H1 (cell line): ENCODE measurements at regions of chr11 and their contacts with region 1.

Region 1: GRCh38 chr11:44893846-44894617 is 56.7 kb downstream of the TP53I11 start:
- DNase-seq: peak; percentile 79 to 92
- H3K4me3 ChIP-seq: no peak overlapping the region
- H3K27ac ChIP-seq: no peak overlapping the region
- H3K4me1 ChIP-seq: peaks cover 2 to 28% (median 9%) of the 10 kb centered on the region in 4 experiments
- H3K27me3 ChIP-seq: peaks cover 0 to 13% (median 3%) of the 10 kb centered on the region in 4 experiments; a peak in 3 of 7 replicates
- CTCF ChIP-seq: peak; percentile 96 to 99 (median 98)
- EP300 ChIP-seq: no peak
- POLR2A ChIP-seq: no peak
- RAD21 ChIP-seq: peak; percentile 98 to 100

Region 2: DNA sequence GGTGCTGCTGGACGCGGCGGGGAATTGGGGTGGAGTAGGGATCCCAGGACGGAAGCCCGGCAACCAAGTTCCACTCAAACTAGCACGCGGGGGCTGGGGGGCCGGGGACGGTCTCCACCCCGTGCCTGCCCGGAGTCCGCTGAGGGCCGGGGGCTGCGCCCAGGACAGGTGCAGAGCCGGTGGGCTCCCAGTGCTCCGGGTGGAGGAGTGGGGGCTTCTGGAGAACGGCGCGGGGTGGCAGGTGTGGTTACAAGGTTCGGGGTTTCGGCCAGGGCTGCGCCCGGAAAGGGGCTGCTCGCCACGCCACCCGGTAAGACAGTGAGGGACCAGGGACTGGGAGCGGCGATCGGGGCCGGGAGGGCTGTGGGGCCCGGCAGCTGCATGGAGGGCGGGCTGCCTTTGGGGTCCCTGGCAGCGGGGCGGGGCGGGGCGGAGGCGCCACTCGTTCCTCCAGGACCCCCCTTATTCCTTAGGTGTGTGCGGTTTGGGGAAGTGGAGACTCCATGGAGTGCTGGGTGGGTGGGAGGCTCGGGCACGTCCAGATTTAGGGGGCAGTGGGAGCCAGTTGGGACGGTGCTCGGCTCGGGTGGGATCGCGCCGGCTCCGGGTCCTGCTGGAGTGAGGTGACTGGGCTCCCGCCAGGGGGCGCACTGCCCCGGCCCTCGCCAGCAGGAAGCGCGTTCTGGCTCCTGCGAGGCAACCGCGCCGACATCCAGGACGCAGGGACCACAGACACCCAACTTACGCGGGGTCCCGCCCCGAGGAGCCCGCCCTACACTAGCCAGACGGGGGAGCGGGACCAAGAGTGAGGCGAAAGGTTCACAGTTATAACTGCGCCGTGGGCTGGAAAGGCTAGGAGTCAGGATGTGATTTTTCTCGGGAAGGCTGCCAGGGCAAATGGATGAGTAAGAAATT is 166.4 kb before region 1 on chr11:
- CTCF ChIA-PET with region 1: interaction called, 25 read pairs
- POLR2A ChIA-PET with region 1: no interaction called
- DNase-seq: peak in 1 of 2 experiments; percentile 93
- H3K4me3 ChIP-seq: peak overlapping the region; percentile 14 to 73 (median 50)
- H3K27ac ChIP-seq: no peak overlapping the region
- H3K4me1 ChIP-seq: peaks cover 24 to 41% (median 26%) of the 10 kb centered on the region in 4 experiments
- H3K27me3 ChIP-seq: peaks cover 26 to 66% (median 57%) of the 10 kb centered on the region in 4 experiments
- CTCF ChIP-seq: peak; percentile 81 to 94 (median 89)
- EP300 ChIP-seq: no peak
- POLR2A ChIP-seq: no peak
- RAD21 ChIP-seq: peak; percentile 80 to 85

Region 3: DNA sequence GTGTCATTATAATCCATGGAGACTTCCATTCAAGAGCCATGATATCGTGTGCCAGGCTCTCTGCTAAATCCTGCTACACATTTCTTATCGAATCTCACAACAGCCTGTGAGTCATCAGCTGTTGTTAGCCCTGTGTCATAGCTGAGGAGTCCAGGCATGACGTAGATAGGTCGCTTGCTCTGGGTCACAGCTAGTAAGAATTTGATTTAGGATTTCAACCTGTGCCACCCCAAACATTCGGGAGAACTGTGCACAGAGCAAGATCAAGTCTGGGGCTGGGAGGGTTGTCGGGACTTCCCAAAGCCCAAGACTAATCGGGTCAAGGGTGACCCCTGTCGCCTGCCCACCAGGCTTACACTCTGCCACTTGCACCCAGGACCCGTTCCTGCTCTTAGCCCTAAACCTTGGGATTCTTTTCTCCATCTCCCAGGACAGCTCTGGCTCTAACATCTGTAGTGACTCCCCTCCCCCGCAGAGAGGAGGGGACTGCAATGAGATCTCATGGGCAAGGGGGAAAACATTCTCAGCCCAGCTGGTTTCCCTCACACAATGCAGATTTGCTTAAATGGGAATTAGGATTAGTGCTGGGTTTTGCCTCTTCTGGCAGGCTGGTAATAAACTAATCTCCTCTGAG is 133.0 kb before region 1 on chr11:
- CTCF ChIA-PET with region 1: interaction called, 13 read pairs
- POLR2A ChIA-PET with region 1: no interaction called
- DNase-seq: peak; percentile 61 to 68
- H3K4me3 ChIP-seq: no peak overlapping the region
- H3K27ac ChIP-seq: no peak overlapping the region
- H3K4me1 ChIP-seq: peaks cover 9 to 22% (median 14%) of the 10 kb centered on the region in 4 experiments
- H3K27me3 ChIP-seq: peaks cover 0 to 9% (median 6%) of the 10 kb centered on the region in 4 experiments; a peak in 5 of 7 replicates
- CTCF ChIP-seq: peak; percentile 75 to 86 (median 85)
- EP300 ChIP-seq: no peak
- POLR2A ChIP-seq: no peak
- RAD21 ChIP-seq: peak; percentile 88 to 90

Region 4: DNA sequence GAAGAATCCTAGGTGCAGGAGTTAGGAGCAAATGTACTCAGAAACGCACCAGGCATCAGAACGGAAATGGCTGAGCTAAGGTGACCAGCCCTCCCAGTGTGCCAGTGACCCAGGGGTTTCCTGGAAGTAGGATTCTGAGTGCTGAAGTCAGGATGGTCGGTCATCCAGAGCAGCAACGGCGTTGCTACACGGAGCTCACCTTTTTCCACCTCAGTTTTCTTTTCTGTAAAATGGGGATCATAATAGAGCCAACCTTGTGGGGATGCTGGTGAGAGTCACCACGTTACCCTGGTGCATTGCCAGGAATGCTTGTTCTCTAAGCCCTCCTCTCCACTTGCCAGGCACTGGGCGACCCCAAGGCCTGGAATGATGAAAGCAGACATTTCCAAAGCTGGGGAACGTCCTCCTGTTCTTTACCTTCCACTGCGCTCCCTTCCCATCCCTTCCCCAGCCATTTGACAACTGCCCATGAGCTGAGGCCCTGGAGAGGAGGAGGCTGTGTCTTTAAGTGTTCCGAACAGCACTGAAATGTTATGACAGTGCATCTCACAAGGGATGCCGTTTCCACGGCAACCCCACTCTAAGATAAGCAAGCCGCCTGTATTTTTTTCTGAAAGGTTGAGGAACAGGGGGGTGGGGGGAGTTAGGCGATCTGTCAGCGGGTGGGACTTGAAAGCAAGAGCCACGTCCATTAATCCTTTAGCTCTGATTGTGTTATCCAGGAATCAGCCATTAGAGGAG is 100.5 kb before region 1 on chr11:
- CTCF ChIA-PET with region 1: interaction called, 18 read pairs
- POLR2A ChIA-PET with region 1: no interaction called
- DNase-seq: no peak
- H3K4me3 ChIP-seq: no peak overlapping the region
- H3K27ac ChIP-seq: no peak overlapping the region
- H3K4me1 ChIP-seq: peaks cover 10 to 23% (median 17%) of the 10 kb centered on the region in 4 experiments
- H3K27me3 ChIP-seq: peaks cover 0 to 4% (median 0%) of the 10 kb centered on the region in 4 experiments; a peak in 1 of 7 replicates
- CTCF ChIP-seq: no peak
- EP300 ChIP-seq: no peak
- POLR2A ChIP-seq: no peak
- RAD21 ChIP-seq: no peak

Region 5: DNA sequence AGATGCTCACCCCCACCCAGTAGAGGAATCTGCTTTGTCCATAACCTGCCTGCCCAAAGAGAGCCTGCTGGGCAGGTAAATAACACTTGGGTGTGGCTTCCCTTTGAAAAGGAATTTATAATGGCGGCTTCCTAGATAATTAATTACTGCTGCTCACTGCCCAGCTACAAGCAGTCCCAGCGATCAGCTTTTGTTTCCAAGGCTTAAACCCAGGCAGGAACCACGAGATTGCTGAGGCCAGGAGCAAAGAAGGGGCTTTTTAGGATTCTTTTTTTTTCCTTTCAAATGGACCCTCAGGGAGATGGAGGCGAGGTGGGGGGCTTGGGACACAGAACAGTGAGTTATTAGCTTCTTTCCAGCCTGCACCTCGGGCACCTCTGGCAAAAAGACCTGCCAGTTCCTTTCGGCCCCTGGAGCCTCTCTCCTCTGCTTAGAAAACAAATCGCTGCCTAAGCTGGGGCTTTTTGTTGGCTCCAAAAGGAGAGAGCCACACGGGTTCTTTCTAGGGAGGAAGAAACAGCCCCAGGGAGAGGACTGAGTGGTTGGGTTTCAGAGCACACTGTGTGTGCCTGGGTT is 60.1 kb before region 1 on chr11:
- CTCF ChIA-PET with region 1: interaction called, 49 read pairs
- POLR2A ChIA-PET with region 1: no interaction called
- DNase-seq: no peak
- H3K4me3 ChIP-seq: no peak overlapping the region; a peak in 1 of 8 replicates
- H3K27ac ChIP-seq: 0 out of 2 replicates have a peak overlapping the region, but pooled peaks have one; percentile 11
- H3K4me1 ChIP-seq: peaks cover 10 to 19% (median 14%) of the 10 kb centered on the region in 4 experiments; a peak in 6 of 7 replicates
- H3K27me3 ChIP-seq: peaks cover 0 to 16% (median 9%) of the 10 kb centered on the region in 4 experiments; a peak in 4 of 7 replicates
- CTCF ChIP-seq: no peak
- EP300 ChIP-seq: no peak
- POLR2A ChIP-seq: no peak
- RAD21 ChIP-seq: no peak

Region 6: GRCh38 chr11:44868455-44869421 is 25.3 kb before region 1 on chr11:
- CTCF ChIA-PET with region 1: interaction called, 12 read pairs
- POLR2A ChIA-PET with region 1: no interaction called
- DNase-seq: no peak
- H3K4me3 ChIP-seq: no peak overlapping the region
- H3K27ac ChIP-seq: no peak overlapping the region
- H3K4me1 ChIP-seq: peaks cover 0 to 15% (median 7%) of the 10 kb centered on the region in 4 experiments; a peak in 6 of 7 replicates
- H3K27me3 ChIP-seq: no peaks in the 10 kb centered on the region
- CTCF ChIP-seq: no peak
- EP300 ChIP-seq: no peak
- POLR2A ChIP-seq: no peak
- RAD21 ChIP-seq: no peak

Region 7: DNA sequence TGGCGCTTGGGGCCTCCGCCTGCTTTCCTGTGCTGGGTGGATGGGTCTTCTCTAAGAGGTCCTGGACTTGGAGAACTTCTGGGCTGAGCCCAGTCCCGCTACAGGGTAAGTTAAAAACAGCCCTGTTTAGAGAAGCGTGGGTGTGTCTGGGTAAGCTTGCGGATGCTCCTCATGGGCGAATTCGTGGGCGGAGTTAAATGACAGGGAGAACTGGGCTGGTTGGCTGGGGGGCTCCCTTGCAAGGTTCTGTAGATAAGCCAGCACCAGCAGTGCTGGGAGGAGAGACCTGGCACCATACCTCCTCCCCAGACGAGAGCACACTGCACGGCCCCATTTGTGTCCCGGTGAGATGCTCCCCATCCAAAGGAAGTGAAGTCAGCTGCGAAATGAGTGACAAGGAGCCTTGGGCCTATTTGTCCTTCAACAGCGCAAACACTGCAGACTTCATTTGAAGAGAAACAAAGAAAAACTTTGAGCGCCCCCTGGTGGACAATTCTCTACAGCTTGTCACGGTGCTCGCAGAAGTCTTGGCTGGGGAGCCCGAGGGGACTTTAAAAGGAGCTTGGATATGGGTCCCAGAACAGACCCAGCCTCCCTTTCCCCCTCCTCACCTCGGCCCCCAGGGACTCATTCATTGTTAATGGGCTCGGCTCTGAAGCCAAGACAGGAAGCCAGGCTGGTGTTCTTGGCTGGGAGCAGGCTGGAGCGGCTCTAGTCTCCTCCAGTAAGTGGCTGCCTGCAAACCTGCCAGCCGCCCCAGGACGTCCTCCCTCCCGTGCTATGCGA is 17.2 kb after region 1 on chr11:
- CTCF ChIA-PET with region 1: interaction called, 17 read pairs
- POLR2A ChIA-PET with region 1: no interaction called
- DNase-seq: peak; percentile 82 to 95
- H3K4me3 ChIP-seq: peak overlapping the region in 2 of 4 experiments; percentile 10 to 47; a peak in 3 of 8 replicates
- H3K27ac ChIP-seq: no peak overlapping the region
- H3K4me1 ChIP-seq: peaks cover 0 to 29% (median 6%) of the 10 kb centered on the region in 4 experiments; a peak in 6 of 7 replicates
- H3K27me3 ChIP-seq: no peaks in the 10 kb centered on the region; a peak in 2 of 7 replicates
- CTCF ChIP-seq: peak; percentile 52 to 79 (median 67)
- EP300 ChIP-seq: 0 out of 3 replicates have a peak, but pooled peaks of 1 of the 2 experiments have one; percentile 7
- POLR2A ChIP-seq: no peak
- RAD21 ChIP-seq: peak; percentile 74 to 82